ENCODE measurements at regions of chr5 and their contacts with region 1.

Region 1: DNA sequence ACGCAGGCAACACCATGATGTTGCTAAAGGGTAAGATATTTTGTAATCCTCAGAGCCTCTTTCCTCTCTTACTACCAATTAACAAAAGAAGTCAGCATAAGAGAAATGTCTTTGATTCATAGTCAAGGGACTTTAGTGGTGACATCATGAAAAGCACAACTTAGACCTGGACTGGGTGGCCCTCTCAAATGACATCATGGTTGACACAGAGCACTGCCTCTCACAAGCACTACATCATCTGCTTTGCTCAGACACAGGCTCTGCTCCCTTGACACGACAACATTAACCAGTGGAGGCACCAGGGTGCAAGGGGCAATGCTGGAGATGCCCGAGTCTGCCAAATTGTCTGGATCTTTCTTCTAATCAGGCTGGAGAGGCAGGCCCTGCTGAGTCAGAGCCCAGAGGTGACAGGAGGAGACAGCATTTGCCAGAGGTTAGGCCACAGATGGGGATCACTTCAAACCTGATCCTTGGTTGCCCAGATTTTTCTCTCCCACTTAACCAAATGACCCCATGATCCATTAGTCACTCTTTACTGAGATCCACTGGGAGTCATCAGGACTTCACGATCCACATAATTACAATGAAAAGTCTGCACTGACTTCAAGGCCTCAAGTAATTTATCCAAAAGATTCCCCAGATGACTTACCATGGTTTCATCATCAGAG is 174.4 kb downstream of the SLIT3 start:
- DNase-seq: no peak
- H3K4me3 ChIP-seq: no peak overlapping the region
- H3K27ac ChIP-seq: no peak overlapping the region
- H3K4me1 ChIP-seq: no peaks in the 10 kb centered on the region
- H3K27me3 ChIP-seq: no peaks in the 10 kb centered on the region
- CTCF ChIP-seq: no peak
- EP300 ChIP-seq: no peak
- POLR2A ChIP-seq: no peak

Region 2: DNA sequence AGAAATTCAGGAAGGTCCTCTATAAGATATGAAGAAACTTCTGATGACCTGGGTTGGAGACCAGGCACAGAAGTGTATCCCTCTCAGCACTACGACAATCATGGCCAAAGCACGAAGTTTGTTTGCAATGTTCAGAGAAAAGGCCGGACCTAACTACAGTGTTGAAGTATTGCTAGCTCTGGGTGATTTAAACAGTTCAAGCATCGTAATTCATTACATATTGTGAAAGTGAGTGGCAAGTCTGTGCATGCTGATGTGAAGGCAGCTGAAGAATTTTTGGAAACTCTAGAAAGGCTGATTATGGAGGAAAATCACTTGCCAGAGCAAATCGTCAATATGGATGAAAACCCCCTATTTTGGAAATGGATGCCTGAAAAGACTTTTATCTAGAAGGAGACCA is 480.2 kb before region 1 on chr5:
- in situ Hi-C with region 1: no loop called
- intact Hi-C with region 1: no loop called
- DNase-seq: no peak
- H3K4me3 ChIP-seq: no peak overlapping the region
- H3K27ac ChIP-seq: peak overlapping the region in 2 of 4 donors; percentile 16 to 38
- H3K4me1 ChIP-seq: peaks cover 0 to 10% (median 0%) of the 10 kb centered on the region in 4 donors
- H3K27me3 ChIP-seq: no peaks in the 10 kb centered on the region
- CTCF ChIP-seq: no peak
- EP300 ChIP-seq: no peak
- POLR2A ChIP-seq: no peak

Region 3: GRCh38 chr5:168995024-168995423 is 131.5 kb before region 1 on chr5:
- in situ Hi-C with region 1: no loop called
- intact Hi-C with region 1: loop called (anchors 1 kb)
- DNase-seq: no peak
- H3K4me3 ChIP-seq: no peak overlapping the region
- H3K27ac ChIP-seq: no peak overlapping the region
- H3K4me1 ChIP-seq: no peaks in the 10 kb centered on the region
- H3K27me3 ChIP-seq: no peaks in the 10 kb centered on the region
- CTCF ChIP-seq: no peak
- EP300 ChIP-seq: no peak
- POLR2A ChIP-seq: no peak

Region 4: GRCh38 chr5:169161022-169161680 is 34.6 kb after region 1 on chr5:
- in situ Hi-C with region 1: no loop called
- intact Hi-C with region 1: no loop called
- DNase-seq: no peak
- H3K4me3 ChIP-seq: no peak overlapping the region
- H3K27ac ChIP-seq: peak overlapping the region; percentile 29 to 47 (median 40)
- H3K4me1 ChIP-seq: peaks cover 0 to 8% (median 0%) of the 10 kb centered on the region in 4 donors
- H3K27me3 ChIP-seq: no peaks in the 10 kb centered on the region
- CTCF ChIP-seq: no peak
- EP300 ChIP-seq: no peak
- POLR2A ChIP-seq: no peak